Dendritic cell treated with granulocyte-macrophage colony-stimulating factor and Interleukin-4, amounts not matched to agents 40 ng/mL and 50 ng/mL, for 4 days (primary cell): ENCODE measurements at regions of chr17 and their contacts with region 1.

Region 1: GRCh38 chr17:45317112-45317928 is 500 bp upstream of the MAP3K14 start:
- H3K4me3 Mint-ChIP-seq: peak overlapping the region; percentile 93
- H3K27ac Mint-ChIP-seq: peak overlapping the region; percentile 96
- H3K4me1 Mint-ChIP-seq: peaks cover 81% of the 10 kb centered on the region
- H3K27me3 Mint-ChIP-seq: peaks cover 5% of the 10 kb centered on the region

Region 2: GRCh38 chr17:45200701-45201100 is 116.6 kb before region 1 on chr17:
- intact Hi-C with region 1: no loop called
- H3K4me3 Mint-ChIP-seq: no peak overlapping the region
- H3K27ac Mint-ChIP-seq: peak overlapping the region; percentile 60
- H3K4me1 Mint-ChIP-seq: peaks cover 45% of the 10 kb centered on the region
- H3K27me3 Mint-ChIP-seq: no peaks in the 10 kb centered on the region

Region 3: GRCh38 chr17:45228763-45229539 is 88.4 kb before region 1 on chr17:
- intact Hi-C with region 1: loop called (anchors 5 kb)
- H3K4me3 Mint-ChIP-seq: peak overlapping the region; percentile 93
- H3K27ac Mint-ChIP-seq: peak overlapping the region; percentile 97
- H3K4me1 Mint-ChIP-seq: peaks cover 100% of the 10 kb centered on the region
- H3K27me3 Mint-ChIP-seq: no peaks in the 10 kb centered on the region

Region 4: GRCh38 chr17:45277216-45277849 is 40.0 kb before region 1 on chr17:
- intact Hi-C with region 1: loop called (anchors 1 kb)
- H3K4me3 Mint-ChIP-seq: no peak overlapping the region
- H3K27ac Mint-ChIP-seq: peak overlapping the region; percentile 40
- H3K4me1 Mint-ChIP-seq: peaks cover 30% of the 10 kb centered on the region
- H3K27me3 Mint-ChIP-seq: no peaks in the 10 kb centered on the region

Region 5: GRCh38 chr17:45293413-45294211 is 23.7 kb before region 1 on chr17:
- intact Hi-C with region 1: loop called (anchors 2 kb)
- H3K4me3 Mint-ChIP-seq: peak overlapping the region; percentile 45
- H3K27ac Mint-ChIP-seq: peak overlapping the region; percentile 94
- H3K4me1 Mint-ChIP-seq: peaks cover 91% of the 10 kb centered on the region
- H3K27me3 Mint-ChIP-seq: no peaks in the 10 kb centered on the region

Region 6: DNA sequence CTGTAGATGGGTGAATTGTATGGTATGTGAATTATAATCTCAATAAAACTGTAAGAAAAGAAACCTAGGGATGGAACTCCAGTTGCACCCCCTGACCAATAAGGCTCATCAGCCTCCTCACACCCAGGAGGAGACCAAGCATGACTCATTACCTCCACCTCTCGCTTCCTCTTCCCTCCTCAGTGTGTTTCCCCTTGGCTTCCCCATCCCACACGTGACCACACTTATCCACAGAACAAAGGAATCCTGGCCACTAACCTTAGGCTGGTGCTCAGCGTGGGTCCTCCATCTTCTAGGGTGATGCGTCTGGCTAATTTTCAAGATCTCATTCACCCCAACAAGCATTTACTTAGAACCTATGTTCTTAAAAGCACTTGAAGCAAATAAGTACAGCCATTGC is 35.7 kb after region 1 on chr17:
- intact Hi-C with region 1: loop called (anchors 2 kb)
- H3K4me3 Mint-ChIP-seq: no peak overlapping the region
- H3K27ac Mint-ChIP-seq: peak overlapping the region; percentile 51
- H3K4me1 Mint-ChIP-seq: peaks cover 41% of the 10 kb centered on the region
- H3K27me3 Mint-ChIP-seq: peaks cover 7% of the 10 kb centered on the region

Region 7: GRCh38 chr17:45371414-45372327 is 54.4 kb after region 1 on chr17:
- intact Hi-C with region 1: loop called (anchors 5 kb)
- H3K4me3 Mint-ChIP-seq: peak overlapping the region; percentile 44
- H3K27ac Mint-ChIP-seq: peak overlapping the region; percentile 41
- H3K4me1 Mint-ChIP-seq: peaks cover 47% of the 10 kb centered on the region
- H3K27me3 Mint-ChIP-seq: peaks cover 16% of the 10 kb centered on the region